CD8-positive, alpha-beta T cell (primary cell): ENCODE measurements at regions of chr19 and their contacts with region 1.

Region 1: DNA sequence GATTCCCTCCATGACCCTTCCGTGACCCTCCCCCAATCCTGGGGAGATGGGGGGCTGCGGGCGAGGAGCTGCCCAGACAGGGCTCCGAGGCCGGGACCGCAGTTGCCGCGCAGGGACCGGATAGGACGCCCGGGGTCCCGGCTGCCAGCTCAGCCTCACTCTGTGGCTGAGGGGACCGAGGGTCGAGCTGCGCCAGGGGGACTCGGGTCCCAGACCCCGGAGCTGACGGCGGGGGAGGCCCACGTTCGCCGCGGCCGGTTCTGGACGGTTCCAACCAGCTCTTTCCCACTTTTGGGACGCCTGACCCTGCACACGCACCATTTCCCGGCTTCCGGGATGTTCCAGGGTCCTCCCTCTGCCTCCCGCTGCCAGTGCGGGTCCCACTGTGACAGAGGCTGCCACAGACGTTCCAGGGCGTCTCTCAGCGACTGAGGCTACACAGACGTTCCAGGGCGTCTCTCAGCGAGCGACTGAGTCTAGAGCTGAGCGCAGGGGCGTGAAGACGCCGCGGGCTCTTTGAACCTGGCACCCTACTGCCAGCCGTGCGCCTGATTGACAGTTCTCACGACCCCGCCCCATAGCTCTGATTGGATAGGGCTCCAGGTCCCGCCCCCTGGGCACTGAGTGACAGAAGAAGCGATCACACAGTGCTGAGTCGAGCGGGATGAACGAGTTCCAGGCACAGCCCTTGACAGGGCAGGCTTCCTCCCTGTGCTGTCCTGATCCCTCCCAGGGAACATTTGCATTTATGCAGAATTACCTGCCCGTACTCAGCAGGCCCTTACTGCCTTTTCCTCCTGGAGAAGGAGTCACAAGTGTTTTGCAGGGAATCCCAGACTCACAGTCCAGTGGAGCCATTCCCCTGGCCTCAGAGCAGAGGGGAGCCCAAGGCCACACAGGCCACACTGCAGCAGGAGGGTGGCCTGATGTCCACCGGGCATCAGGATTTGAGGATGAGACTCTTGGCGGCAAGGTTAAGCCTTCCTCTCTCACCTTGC is at the start of gene ZNF563:
- DNase-seq: peak; percentile 94 to 98 (median 97)
- ATAC-seq: peak; percentile 94
- H3K4me3 ChIP-seq: peak within 1 kb of the TSS; percentile 81 to 86
- H3K4me3 Mint-ChIP-seq: peak within 1 kb of the TSS; percentile 96
- H3K27ac ChIP-seq: peak within 1 kb of the TSS; percentile 81 to 83
- H3K27ac Mint-ChIP-seq: peak within 1 kb of the TSS; percentile 99
- H3K4me1 ChIP-seq: peaks cover 35% of the 10 kb centered on the region
- H3K4me1 Mint-ChIP-seq: peaks cover 41% of the 10 kb centered on the region
- H3K27me3 ChIP-seq: no peaks in the 10 kb centered on the region
- H3K27me3 Mint-ChIP-seq: no peaks in the 10 kb centered on the region
- CTCF ChIP-seq: no peak
- total RNA-seq, gene ZNF563: 2.2 to 2.5 TPM

Region 2: DNA sequence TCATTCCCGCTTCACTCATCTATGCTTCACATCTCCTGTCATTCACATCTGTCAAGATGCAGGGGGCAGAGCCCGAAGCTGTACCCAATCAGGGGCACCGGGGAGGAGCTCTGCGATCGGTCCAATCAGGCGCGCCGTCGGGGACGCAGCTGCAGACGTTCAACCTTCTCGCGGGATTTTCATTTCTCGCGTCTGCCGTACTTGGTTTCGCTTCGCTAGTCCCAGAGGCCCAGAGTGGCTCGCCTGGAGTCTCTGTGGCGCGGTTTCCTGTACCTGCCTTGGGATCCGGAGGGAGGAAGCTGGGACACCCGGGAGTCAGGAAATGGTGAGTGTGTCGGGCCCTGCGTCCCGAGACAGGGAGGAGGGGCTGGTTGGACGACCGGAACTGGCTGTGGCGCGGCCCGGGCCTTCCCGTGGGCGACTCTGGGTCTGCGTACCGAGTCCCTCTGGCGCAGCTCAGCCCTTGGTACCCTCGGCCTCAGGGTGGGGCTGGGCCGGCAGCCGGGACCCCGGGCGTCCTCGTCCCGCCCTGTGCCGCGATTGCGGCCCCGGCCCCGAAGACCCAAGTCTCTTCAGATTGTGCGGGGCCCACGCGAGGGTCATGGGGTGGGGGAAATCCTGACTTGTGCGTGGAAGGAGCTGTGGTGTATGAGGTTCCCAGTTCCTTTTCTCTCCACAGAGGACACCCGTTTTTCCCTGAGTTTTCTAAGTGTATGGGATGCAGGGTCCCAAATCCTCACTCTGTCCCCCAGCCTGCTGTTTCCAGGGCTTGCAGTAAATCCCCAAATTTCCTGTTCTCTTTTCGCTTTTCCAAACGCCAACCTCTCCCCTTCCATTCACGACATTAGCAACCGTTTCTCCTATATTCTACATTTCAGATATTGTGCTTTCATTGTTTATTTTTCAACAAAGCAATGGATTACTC is 170.3 kb before region 1 on chr19 and contains the start of gene ZNF136:
- CTCF ChIA-PET with region 1: no interaction called
- POLR2A ChIA-PET with region 1: interaction called, 21 read pairs
- intact Hi-C with region 1: loop called (anchors 2 kb)
- DNase-seq: peak; percentile 84 to 97 (median 91)
- ATAC-seq: peak; percentile 99
- H3K4me3 ChIP-seq: peak within 1 kb of the TSS; percentile 83 to 86
- H3K4me3 Mint-ChIP-seq: peak within 1 kb of the TSS; percentile 96
- H3K27ac ChIP-seq: peak within 1 kb of the TSS; percentile 93 to 96
- H3K27ac Mint-ChIP-seq: peak within 1 kb of the TSS; percentile 98
- H3K4me1 ChIP-seq: peaks cover 25% of the 10 kb centered on the region
- H3K4me1 Mint-ChIP-seq: peaks cover 46% of the 10 kb centered on the region
- H3K27me3 ChIP-seq: no peaks in the 10 kb centered on the region
- H3K27me3 Mint-ChIP-seq: no peaks in the 10 kb centered on the region
- CTCF ChIP-seq: no peak
- total RNA-seq, gene ZNF136: 41.7 to 42.1 TPM

Region 3: DNA sequence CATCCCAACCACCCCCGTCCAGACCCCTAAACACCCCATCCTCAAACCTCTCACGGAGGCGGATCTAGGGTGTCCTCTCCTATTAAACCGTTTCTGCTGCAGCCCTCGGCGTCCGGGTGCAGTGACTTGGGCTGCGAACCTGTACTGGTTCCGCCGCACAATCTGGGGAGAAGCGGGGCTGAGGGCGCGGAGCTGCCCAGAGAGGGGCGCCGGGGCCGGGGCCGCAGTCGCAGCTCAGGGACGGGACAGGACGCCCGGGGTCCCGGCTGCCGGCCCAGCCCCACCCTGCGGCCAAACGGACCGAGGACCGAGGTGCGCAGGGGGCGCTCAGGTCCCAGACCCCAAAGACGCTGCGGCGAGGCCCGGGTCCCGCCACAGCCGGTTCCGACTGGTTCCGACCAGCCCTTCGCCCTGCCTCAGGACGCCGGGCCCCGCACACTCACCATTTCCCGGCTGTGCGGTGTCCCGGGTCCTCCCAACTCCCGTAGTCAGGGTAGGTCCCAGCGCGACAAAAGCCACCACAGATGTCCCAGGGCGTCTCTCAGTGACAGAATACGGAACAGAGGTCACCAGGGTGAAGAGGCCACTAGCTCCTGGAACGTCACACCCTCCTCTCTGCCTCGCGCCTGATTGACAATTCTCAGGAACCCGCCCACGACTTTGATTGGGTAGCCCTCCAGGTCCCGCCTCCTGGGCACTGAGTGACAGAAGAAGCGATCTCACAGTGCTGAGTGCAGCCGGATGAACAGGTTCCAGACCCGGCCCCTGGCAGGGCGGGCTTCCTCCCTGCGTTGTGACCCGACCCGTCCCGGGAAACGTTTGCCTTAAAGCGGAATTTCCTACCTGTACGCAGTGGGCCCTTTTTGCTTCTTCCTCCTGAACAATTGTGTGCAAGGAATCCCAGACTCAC is 39.0 kb before region 1 on chr19 and contains the start of gene ZNF44:
- CTCF ChIA-PET with region 1: interaction called, 7 read pairs
- POLR2A ChIA-PET with region 1: interaction called, 25 read pairs
- intact Hi-C with region 1: loop called (anchors 1 kb)
- DNase-seq: peak; percentile 91 to 97 (median 95)
- ATAC-seq: peak; percentile 96
- H3K4me3 ChIP-seq: peak within 1 kb of the TSS; percentile 82 to 85
- H3K4me3 Mint-ChIP-seq: peak within 1 kb of the TSS; percentile 99
- H3K27ac ChIP-seq: peak within 1 kb of the TSS; percentile 75 to 84
- H3K27ac Mint-ChIP-seq: peak within 1 kb of the TSS; percentile 98
- H3K4me1 ChIP-seq: peaks cover 23% of the 10 kb centered on the region
- H3K4me1 Mint-ChIP-seq: peaks cover 43% of the 10 kb centered on the region
- H3K27me3 ChIP-seq: no peaks in the 10 kb centered on the region
- H3K27me3 Mint-ChIP-seq: no peaks in the 10 kb centered on the region
- CTCF ChIP-seq: no peak
- total RNA-seq, gene ZNF44: 21.9 to 22.0 TPM

Region 4: DNA sequence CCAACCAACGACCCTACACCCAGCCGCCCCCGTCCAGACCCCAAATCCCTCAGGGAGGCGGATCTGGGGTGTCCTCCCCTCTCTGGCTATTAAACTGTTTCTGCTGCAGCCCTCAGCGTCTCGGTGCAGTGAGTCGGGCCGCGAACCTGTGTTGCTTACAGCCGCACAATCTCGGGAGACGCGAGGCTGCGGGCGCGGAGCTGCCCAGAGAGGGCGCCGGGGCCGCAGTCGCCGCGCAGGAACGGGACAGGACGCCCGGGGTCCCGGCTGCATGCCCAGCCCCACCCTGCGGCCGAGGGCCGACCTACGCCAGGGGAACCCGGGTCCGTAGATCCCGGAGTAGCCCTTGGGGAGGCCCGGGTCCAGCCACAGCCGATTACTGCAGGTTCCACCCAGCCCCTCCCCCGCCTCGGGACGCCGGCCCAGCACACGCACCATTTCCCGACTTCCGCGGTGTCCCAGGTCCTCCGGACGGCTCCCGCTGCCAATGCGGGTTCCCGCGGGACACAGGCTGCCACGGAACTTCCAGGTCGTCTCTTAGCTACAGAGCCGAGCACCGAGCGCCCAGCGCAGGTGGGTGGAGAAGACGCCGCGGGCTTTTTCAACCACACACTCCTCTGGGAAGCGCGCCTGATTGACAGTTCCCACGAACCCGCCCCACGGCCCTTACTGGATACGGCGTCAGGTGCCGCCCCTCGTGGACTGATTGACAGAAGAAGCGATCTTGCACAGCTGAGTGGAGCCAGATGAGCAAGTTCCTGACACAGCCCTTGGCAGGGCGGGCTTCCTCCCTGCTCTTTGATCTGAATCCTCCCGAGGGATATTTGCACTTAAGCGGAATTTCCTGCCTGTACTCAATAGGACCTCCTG is 67.4 kb after region 1 on chr19 and contains the start of gene ZNF799:
- CTCF ChIA-PET with region 1: no interaction called
- POLR2A ChIA-PET with region 1: interaction called, 4 read pairs
- intact Hi-C with region 1: loop called (anchors 1 to 2 kb)
- DNase-seq: peak; percentile 38 to 88 (median 81)
- ATAC-seq: peak; percentile 91
- H3K4me3 ChIP-seq: peak within 1 kb of the TSS; percentile 94 to 96
- H3K4me3 Mint-ChIP-seq: peak within 1 kb of the TSS; percentile 90
- H3K27ac ChIP-seq: peak within 1 kb of the TSS; percentile 37 to 58
- H3K27ac Mint-ChIP-seq: peak within 1 kb of the TSS; percentile 81
- H3K4me1 ChIP-seq: peaks cover 4% of the 10 kb centered on the region
- H3K4me1 Mint-ChIP-seq: peaks cover 27% of the 10 kb centered on the region
- H3K27me3 ChIP-seq: no peaks in the 10 kb centered on the region
- H3K27me3 Mint-ChIP-seq: no peaks in the 10 kb centered on the region
- CTCF ChIP-seq: no peak
- total RNA-seq, gene ZNF799: 1.1 TPM

Region 5: DNA sequence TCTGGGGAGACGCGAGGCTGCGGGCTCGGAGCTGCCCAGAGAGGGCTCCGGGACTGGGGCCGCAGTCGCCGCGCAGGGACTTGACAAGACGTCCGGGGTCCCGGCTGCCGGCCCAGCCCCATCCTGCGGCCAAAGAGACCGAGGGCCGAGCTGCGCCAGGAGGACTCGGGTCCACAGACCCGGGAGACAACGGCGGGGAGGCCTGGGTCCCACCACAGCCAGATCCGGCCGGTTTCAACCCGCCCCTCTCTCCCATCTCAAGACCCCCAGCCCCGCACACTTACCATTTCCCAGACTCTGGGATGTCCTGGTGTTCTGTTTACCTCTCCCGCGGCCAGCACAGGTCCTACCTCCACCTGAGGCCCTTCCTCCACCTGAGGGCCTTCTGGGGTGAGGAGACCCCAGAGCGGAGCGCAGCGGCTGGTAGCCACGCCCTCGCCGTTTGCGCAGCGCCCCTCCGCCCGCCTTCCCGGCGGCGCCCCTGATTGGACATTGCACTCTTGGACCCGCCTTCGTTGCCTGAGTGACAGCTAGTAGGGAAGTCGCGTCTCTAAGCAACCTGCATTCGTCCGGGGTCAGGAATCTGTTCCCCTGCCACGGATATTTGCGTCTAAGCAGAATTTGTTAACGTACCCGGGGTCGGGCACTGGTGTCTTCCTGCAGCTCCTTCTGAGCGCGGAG is 151.1 kb after region 1 on chr19 and contains the start of gene ZNF709:
- CTCF ChIA-PET with region 1: no interaction called
- POLR2A ChIA-PET with region 1: interaction called, 4 read pairs
- intact Hi-C with region 1: loop called in 1 of 2 experiments (anchors 1 kb)
- DNase-seq: peak; percentile 78 to 93 (median 90)
- ATAC-seq: peak; percentile 98
- H3K4me3 ChIP-seq: peak within 1 kb of the TSS; percentile 92 to 93
- H3K4me3 Mint-ChIP-seq: peak within 1 kb of the TSS; percentile 94
- H3K27ac ChIP-seq: peak within 1 kb of the TSS; percentile 73 to 76
- H3K27ac Mint-ChIP-seq: peak within 1 kb of the TSS; percentile 94
- H3K4me1 ChIP-seq: peaks cover 23% of the 10 kb centered on the region
- H3K4me1 Mint-ChIP-seq: peaks cover 31% of the 10 kb centered on the region
- H3K27me3 ChIP-seq: no peaks in the 10 kb centered on the region
- H3K27me3 Mint-ChIP-seq: no peaks in the 10 kb centered on the region
- CTCF ChIP-seq: no peak
- total RNA-seq, gene ZNF709: 4.3 to 4.5 TPM